PC-9 (cell line): ENCODE measurements at regions of chr10 and their contacts with region 1.

Region 1: GRCh38 chr10:77011874-77012811 is 625.5 kb downstream of the KCNMA1 start:
- DNase-seq: no peak
- H3K4me3 ChIP-seq: no peak overlapping the region
- H3K27ac ChIP-seq: no peak overlapping the region
- H3K4me1 ChIP-seq: no peaks in the 10 kb centered on the region
- H3K27me3 ChIP-seq: no peaks in the 10 kb centered on the region
- CTCF ChIP-seq: no peak

Region 2: GRCh38 chr10:77111611-77112550 is 99.7 kb after region 1 on chr10:
- CTCF ChIA-PET with region 1: no interaction called
- POLR2A ChIA-PET with region 1: no interaction called
- intact Hi-C with region 1: loop called (anchors 10 kb)
- DNase-seq: peak; percentile 16 to 47
- H3K4me3 ChIP-seq: no peak overlapping the region
- H3K27ac ChIP-seq: no peak overlapping the region
- H3K4me1 ChIP-seq: peaks cover 5% of the 10 kb centered on the region; the same call in 1 of the 2 replicates
- H3K27me3 ChIP-seq: no peaks in the 10 kb centered on the region
- CTCF ChIP-seq: peak; percentile 97

Region 3: DNA sequence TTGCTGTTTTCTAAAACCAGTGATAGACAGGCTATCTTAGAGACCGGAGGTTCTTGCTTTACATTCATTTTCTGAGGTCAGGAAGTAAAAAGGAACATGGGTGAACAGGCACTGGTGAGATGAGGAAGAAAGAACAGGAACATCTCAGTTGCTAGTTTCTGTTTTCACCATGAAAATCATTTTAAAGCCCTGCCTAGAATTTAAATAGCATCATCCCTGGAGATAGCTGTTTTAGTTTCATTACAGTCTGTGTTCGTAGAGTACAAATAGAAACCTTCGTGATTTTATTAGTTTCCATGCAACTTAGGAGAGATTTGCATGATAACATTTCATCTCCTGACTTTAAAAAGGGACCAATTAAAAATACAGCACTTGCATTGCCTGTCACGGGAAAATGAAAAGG is 610.7 kb after region 1 on chr10:
- CTCF ChIA-PET with region 1: no interaction called
- POLR2A ChIA-PET with region 1: no interaction called
- intact Hi-C with region 1: no loop called
- DNase-seq: no peak
- H3K4me3 ChIP-seq: no peak overlapping the region
- H3K27ac ChIP-seq: no peak overlapping the region
- H3K4me1 ChIP-seq: no peaks in the 10 kb centered on the region
- H3K27me3 ChIP-seq: no peaks in the 10 kb centered on the region
- CTCF ChIP-seq: no peak